Natural killer cell (primary cell): ENCODE measurements at regions of chr11 and their contacts with region 1.

Region 1: GRCh38 chr11:46845740-46846509 is at the start of gene CKAP5:
- DNase-seq: peak; percentile 87 to 90
- ATAC-seq: peak; percentile 91 to 95 (median 93)
- H3K4me3 ChIP-seq: peak within 1 kb of the TSS; percentile 91
- H3K4me3 Mint-ChIP-seq: peak within 1 kb of the TSS; percentile 99
- H3K27ac ChIP-seq: peak within 1 kb of the TSS; percentile 76
- H3K27ac Mint-ChIP-seq: peak within 1 kb of the TSS; percentile 86 to 96
- H3K4me1 ChIP-seq: peaks cover 14% of the 10 kb centered on the region
- H3K4me1 Mint-ChIP-seq: peaks cover 34 to 35% of the 10 kb centered on the region in 2 donors
- H3K27me3 ChIP-seq: no peaks in the 10 kb centered on the region
- H3K27me3 Mint-ChIP-seq: no peaks in the 10 kb centered on the region
- CTCF ChIP-seq: no peak
- total RNA-seq, gene CKAP5: 39.1 to 63.7 (median 46.3) TPM

Region 2: GRCh38 chr11:46826310-46827044 is 19.4 kb before region 1 on chr11:
- intact Hi-C with region 1: loop called (anchors 1 kb)
- DNase-seq: peak; percentile 77 to 81
- ATAC-seq: peak; percentile 99 to 100 (median 100)
- H3K4me3 ChIP-seq: peak overlapping the region; percentile 52
- H3K4me3 Mint-ChIP-seq: peak overlapping the region; percentile 87
- H3K27ac ChIP-seq: peak overlapping the region; percentile 0
- H3K27ac Mint-ChIP-seq: peak overlapping the region; percentile 50 to 84
- H3K4me1 ChIP-seq: peaks cover 13% of the 10 kb centered on the region
- H3K4me1 Mint-ChIP-seq: peaks cover 23% of the 10 kb centered on the region in 2 donors
- H3K27me3 ChIP-seq: no peaks in the 10 kb centered on the region
- H3K27me3 Mint-ChIP-seq: no peaks in the 10 kb centered on the region
- CTCF ChIP-seq: no peak